Heart left ventricle (tissue), 16 donors: ENCODE measurements at regions of chr22 and their contacts with region 1.

Region 1: GRCh38 chr22:25368271-25368670 is 148.8 kb downstream of the CRYBB2 start:
- DNase-seq: no peak
- ATAC-seq: peak in 1 of 4 donors; percentile 51
- H3K4me3 ChIP-seq: no peak overlapping the region
- H3K27ac ChIP-seq: no peak overlapping the region
- H3K4me1 ChIP-seq: peaks cover 0 to 49% (median 25%) of the 10 kb centered on the region in 12 donors
- H3K27me3 ChIP-seq: no peaks in the 10 kb centered on the region
- CTCF ChIP-seq: no peak
- POLR2A ChIP-seq: no peak

Region 2: DNA sequence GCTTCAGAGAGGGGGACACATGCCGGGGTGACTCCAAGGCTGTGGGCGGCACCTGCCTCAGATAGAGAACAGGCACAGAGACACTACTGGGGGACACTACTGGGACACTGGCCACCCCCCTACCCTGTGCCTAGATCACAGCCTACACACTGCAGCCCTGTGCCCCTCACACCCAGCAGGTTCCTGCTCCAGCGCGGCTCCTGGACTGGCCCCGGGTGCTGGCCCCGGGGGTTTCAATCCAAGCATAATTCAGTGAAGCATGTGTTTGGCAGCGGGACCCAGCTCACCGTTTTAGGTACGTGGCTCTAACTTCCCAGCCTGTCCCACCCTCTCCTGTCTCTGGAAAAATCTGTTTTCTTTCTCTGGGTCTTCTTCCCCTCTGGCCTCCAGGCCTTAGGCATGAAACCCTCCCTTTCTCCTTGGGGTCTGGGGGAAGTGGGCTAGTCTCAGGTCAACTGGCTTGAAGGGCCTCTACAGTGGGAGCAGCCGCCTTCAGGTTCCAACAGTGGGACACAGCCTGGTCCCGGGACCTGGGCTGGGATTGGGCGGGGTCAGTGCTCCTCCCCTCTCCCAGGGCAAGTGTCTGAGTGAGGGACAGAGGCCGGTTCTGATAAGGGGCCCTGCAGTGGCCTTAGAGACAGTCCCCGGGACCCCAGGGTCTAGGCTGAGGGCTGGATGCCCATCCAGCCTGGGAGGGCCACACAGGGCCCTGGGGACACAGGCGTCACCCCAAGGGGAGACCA is 50.0 kb before region 1 on chr22:
- intact Hi-C with region 1: no loop called
- DNase-seq: no peak
- ATAC-seq: peak in 1 of 4 donors; percentile 29
- H3K4me3 ChIP-seq: no peak overlapping the region
- H3K27ac ChIP-seq: no peak overlapping the region
- H3K4me1 ChIP-seq: no peaks in the 10 kb centered on the region
- H3K27me3 ChIP-seq: no peaks in the 10 kb centered on the region
- CTCF ChIP-seq: no peak
- POLR2A ChIP-seq: no peak

Region 3: DNA sequence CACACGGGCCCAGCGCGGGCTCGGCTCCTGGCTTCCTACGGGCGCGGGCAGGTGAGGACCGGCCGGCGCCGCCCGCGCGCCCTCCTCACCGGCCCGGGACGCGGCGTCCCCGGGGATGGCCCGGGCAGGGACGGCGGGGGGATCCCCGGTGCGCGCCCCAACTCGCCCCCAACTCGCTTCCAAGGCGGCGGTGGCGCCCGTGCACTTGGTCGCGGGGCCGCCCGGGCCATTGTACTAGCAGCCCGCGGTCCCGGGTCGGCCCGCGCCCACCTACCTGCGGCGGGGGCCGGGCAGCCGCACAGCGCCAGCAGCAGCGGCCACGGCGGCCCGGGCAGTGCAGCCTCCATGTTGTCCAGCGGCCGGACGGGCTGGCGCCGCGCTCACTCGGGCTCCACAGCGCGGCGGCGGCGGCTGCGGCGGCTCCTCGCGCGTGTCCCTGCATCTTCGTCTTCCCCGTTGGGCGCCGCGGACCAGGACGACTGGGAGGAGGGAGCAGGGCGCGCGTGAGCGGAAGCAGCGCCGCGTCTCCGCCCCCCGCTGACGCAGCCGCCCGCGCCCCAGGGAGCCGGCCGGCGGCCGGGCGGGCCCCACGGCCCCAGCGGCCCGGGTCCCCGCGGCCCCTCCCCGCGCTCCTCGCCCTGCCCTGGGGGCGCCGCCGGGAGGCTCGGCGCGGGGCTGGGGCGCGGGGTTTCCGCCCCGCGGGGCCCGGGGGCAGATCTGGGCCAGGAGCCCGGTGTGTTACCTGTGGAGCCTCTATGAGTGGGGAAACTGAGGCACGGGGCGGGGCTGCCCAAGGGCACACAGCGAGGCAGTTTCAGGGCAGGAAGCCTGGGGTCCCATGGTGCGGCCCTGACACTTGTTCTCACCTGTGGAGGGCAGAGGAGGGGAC is 36.9 kb after region 1 on chr22:
- intact Hi-C with region 1: loop called in 8 of 10 experiments (anchors 1 to 5 kb)
- DNase-seq: peak; percentile 84 to 95 (median 89)
- ATAC-seq: peak; percentile 38 to 80 (median 68)
- H3K4me3 ChIP-seq: peak overlapping the region; percentile 53 to 87 (median 72)
- H3K27ac ChIP-seq: peak overlapping the region; percentile 69 to 97 (median 88)
- H3K4me1 ChIP-seq: peaks cover 16 to 55% (median 44%) of the 10 kb centered on the region in 12 donors
- H3K27me3 ChIP-seq: no peaks in the 10 kb centered on the region
- CTCF ChIP-seq: no peak
- POLR2A ChIP-seq: peak in 1 of 2 donors; percentile 78